PC-3 (cell line): ENCODE measurements at regions of chr5 and their contacts with region 1.

Region 1: GRCh38 chr5:100903039-100903887 is at the start of gene ST8SIA4:
- DNase-seq: peak; percentile 85
- ATAC-seq: peak; percentile 86
- H3K4me3 ChIP-seq: peak within 1 kb of the TSS; percentile 72
- H3K27ac ChIP-seq: no peak within 1 kb of the TSS
- H3K4me1 ChIP-seq: peaks cover 26% of the 10 kb centered on the region
- H3K27me3 ChIP-seq: peaks cover 19% of the 10 kb centered on the region; the same call in 1 of the 2 replicates
- CTCF ChIP-seq: no peak
- total RNA-seq, gene ST8SIA4: 0.63 and 0.91 TPM in 2 replicates

Region 2: DNA sequence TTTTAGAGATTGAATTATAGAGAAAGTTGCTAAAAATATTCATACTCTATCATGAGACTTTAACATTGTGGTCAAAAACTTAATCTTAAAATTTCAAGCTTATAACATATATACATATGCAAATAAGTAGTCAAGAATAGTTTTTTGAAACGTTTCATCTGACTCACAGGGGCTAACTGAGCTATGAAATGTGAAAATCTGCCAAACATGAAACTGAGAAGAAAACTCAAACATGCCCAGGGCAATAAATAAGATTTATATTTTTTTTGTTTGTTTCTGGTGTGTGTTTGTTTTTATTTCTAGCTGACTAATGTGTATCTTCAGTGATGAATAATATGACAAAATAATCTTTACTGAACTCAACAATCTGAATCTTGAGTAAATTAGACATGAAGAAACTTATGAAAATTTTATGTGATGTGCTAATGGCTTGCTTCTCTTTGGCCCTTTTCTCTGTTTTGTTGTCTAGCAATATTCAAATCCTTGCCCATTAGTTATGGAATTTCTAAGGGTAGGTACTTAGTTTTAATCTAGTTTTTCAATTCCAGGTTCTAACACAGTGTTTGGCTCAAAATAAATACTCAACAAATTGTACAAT is 268.2 kb before region 1 on chr5:
- CTCF ChIA-PET with region 1: interaction called, 4 read pairs
- POLR2A ChIA-PET with region 1: no interaction called
- intact Hi-C with region 1: loop called (anchors 5 kb)
- DNase-seq: peak; percentile 85
- ATAC-seq: peak; percentile 96
- H3K4me3 ChIP-seq: no peak overlapping the region
- H3K27ac ChIP-seq: peak overlapping the region; percentile 38
- H3K4me1 ChIP-seq: peaks cover 15% of the 10 kb centered on the region
- H3K27me3 ChIP-seq: no peaks in the 10 kb centered on the region
- CTCF ChIP-seq: no peak

Region 3: GRCh38 chr5:100827481-100827889 is 75.8 kb before region 1 on chr5:
- CTCF ChIA-PET with region 1: no interaction called
- POLR2A ChIA-PET with region 1: no interaction called
- intact Hi-C with region 1: loop called (anchors 5 kb)
- DNase-seq: peak; percentile 94
- ATAC-seq: peak; percentile 83
- H3K4me3 ChIP-seq: peak overlapping the region; percentile 6; the same call in 1 of the 2 replicates
- H3K27ac ChIP-seq: peak overlapping the region; percentile 61
- H3K4me1 ChIP-seq: peaks cover 35% of the 10 kb centered on the region
- H3K27me3 ChIP-seq: no peaks in the 10 kb centered on the region
- CTCF ChIP-seq: no peak

Region 4: GRCh38 chr5:100890461-100891008 is 12.7 kb before region 1 on chr5:
- CTCF ChIA-PET with region 1: no interaction called
- POLR2A ChIA-PET with region 1: no interaction called
- intact Hi-C with region 1: loop called (anchors 1 kb)
- DNase-seq: peak; percentile 61
- ATAC-seq: peak; percentile 89
- H3K4me3 ChIP-seq: peak overlapping the region; percentile 56
- H3K27ac ChIP-seq: 0 out of 2 replicates have a peak overlapping the region, but pooled peaks have one; percentile 1
- H3K4me1 ChIP-seq: peaks cover 10% of the 10 kb centered on the region; the same call in 1 of the 2 replicates
- H3K27me3 ChIP-seq: no peaks in the 10 kb centered on the region
- CTCF ChIP-seq: no peak

Region 5: GRCh38 chr5:101009758-101010519 is 106.7 kb after region 1 on chr5:
- CTCF ChIA-PET with region 1: no interaction called
- POLR2A ChIA-PET with region 1: no interaction called
- intact Hi-C with region 1: loop called (anchors 10 kb)
- DNase-seq: no peak
- ATAC-seq: no peak; the same call in 1 of the 2 replicates
- H3K4me3 ChIP-seq: no peak overlapping the region
- H3K27ac ChIP-seq: no peak overlapping the region
- H3K4me1 ChIP-seq: no peaks in the 10 kb centered on the region
- H3K27me3 ChIP-seq: no peaks in the 10 kb centered on the region
- CTCF ChIP-seq: no peak